Cardiac septum (tissue), 1 donor: ENCODE measurements at regions of chr6 and their contacts with region 1.

Region 1: GRCh38 chr6:139863346-139863745 is 488.9 kb upstream of the CITED2 start:
- DNase-seq: no peak

Region 2: GRCh38 chr6:139519571-139520031 is 343.7 kb before region 1 on chr6:
- intact Hi-C with region 1: loop called (anchors 10 kb)
- DNase-seq: no peak